ENCODE measurements at regions of chr14 and their contacts with region 1.

Region 1: GRCh38 chr14:81453166-81453766 is 53.1 kb upstream of the STON2 start:
- DNase-seq: peak; percentile 60
- H3K4me3 Mint-ChIP-seq: no peak overlapping the region
- H3K27ac Mint-ChIP-seq: no peak overlapping the region
- H3K4me1 Mint-ChIP-seq: peaks cover 5% of the 10 kb centered on the region
- H3K27me3 Mint-ChIP-seq: peaks cover 20% of the 10 kb centered on the region

Region 2: DNA sequence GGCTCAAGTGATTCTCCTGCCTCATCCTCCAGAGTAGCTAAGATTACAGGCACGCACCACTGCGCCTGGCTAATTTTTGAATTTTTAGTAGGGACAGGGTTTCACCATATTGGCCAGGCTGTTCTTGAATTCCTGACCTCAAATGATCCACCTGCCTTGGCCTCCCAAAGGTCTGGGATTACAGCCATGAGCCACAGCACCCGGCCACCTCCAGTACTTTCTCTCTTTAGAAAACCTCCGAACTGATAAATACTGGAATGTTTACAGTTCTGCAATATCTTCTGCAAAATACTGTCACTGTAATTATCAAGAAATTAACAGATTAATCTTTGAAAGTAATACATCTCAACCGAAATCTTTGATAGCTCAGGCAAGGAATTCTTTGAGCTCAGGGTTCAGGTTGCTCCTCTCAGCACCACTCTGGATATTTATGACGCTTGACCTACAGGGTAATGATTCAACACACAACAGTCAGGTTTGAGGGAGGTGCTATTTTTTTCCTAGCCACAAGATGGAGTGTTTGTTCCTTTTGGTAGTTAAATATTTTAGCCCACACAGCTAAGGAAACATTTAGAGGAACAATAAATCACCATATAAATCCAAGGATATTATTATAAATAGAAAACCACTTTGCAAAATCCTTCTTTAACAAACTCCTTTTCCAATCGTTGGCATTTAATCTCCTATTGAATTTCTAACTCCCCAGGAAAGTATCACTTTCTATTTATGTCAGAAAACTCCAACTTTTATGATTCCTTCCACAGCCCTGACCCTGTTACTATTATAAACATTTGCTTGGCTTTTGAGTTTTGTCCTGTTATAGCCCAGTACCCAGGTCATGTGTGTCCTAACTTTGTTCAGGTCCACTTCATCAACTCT is 183.9 kb before region 1 on chr14:
- CTCF ChIA-PET with region 1: interaction called, 118 read pairs
- POLR2A ChIA-PET with region 1: no interaction called
- DNase-seq: no peak
- H3K4me3 Mint-ChIP-seq: no peak overlapping the region
- H3K27ac Mint-ChIP-seq: no peak overlapping the region
- H3K4me1 Mint-ChIP-seq: peaks cover 10% of the 10 kb centered on the region
- H3K27me3 Mint-ChIP-seq: peaks cover 27% of the 10 kb centered on the region

Region 3: DNA sequence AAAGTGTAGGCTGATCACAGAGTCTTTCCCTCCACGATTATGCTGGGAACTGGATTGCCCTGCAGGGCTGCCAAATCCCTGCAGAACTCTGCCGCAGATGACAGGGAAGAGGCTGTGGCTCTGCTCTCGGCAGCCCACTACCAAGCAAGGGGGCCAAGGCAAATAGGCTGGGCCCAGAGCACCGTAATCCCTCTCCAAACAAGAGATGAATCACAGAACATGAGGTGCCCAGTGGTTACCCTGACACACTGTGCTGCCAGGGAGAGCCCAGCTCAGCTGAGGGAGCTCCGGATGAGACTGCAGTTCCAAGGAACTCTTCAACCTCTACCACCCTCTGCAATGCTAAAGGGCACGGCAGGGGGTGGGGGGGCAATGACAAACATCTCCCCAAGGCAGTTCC is 87.1 kb before region 1 on chr14:
- CTCF ChIA-PET with region 1: no interaction called
- POLR2A ChIA-PET with region 1: no interaction called
- DNase-seq: no peak
- H3K4me3 Mint-ChIP-seq: no peak overlapping the region
- H3K27ac Mint-ChIP-seq: no peak overlapping the region
- H3K4me1 Mint-ChIP-seq: no peaks in the 10 kb centered on the region
- H3K27me3 Mint-ChIP-seq: peaks cover 1% of the 10 kb centered on the region

Region 4: GRCh38 chr14:81473456-81474147 is 20.3 kb after region 1 on chr14:
- CTCF ChIA-PET with region 1: interaction called, 11 read pairs
- POLR2A ChIA-PET with region 1: no interaction called
- DNase-seq: no peak
- H3K4me3 Mint-ChIP-seq: peak overlapping the region; percentile 61
- H3K27ac Mint-ChIP-seq: peak overlapping the region; percentile 92
- H3K4me1 Mint-ChIP-seq: peaks cover 55% of the 10 kb centered on the region
- H3K27me3 Mint-ChIP-seq: no peaks in the 10 kb centered on the region

Measured in activated CD4-positive, alpha-beta memory T cell treated with anti-CD3 and anti-CD28 coated beads, Interleukin-2, amount 10 ng/mL, durations not matched to agents 7 days and 5 days (primary cell).